ENCODE measurements at regions of chr1 and their contacts with region 1.

Region 1: DNA sequence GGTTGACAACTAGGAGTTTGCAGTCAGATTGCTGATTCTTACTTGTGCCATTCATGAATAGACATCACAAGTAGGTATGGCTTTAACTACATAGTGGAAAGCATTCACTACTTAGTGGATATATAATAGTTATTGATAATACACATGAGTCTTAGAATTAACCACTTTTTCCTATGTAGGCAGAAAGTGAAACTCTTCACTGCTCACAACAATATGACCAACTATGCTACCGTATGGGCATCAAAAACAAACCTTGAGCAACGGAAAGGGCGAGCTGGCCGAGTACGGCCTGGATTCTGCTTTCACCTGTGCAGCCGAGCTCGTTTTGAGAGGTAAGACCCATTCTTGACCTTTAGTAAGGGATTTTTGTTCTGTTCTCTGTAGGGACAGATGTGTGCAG is 38.7 kb downstream of the DHX9 start:
- DNase-seq: no peak
- H3K4me3 ChIP-seq: no peak overlapping the region
- H3K27ac ChIP-seq: no peak overlapping the region
- H3K4me1 ChIP-seq: no peaks in the 10 kb centered on the region
- H3K27me3 ChIP-seq: no peaks in the 10 kb centered on the region
- CTCF ChIP-seq: no peak
- POLR2A ChIP-seq: no peak

Region 2: GRCh38 chr1:182863940-182864339 is 13.9 kb before region 1 on chr1:
- CTCF ChIA-PET with region 1: no interaction called
- POLR2A ChIA-PET with region 1: no interaction called
- dilution Hi-C with region 1: no loop called
- intact Hi-C with region 1: loop called (anchors 2 kb)
- DNase-seq: no peak
- H3K4me3 ChIP-seq: no peak overlapping the region
- H3K27ac ChIP-seq: no peak overlapping the region
- H3K4me1 ChIP-seq: no peaks in the 10 kb centered on the region
- H3K27me3 ChIP-seq: no peaks in the 10 kb centered on the region
- CTCF ChIP-seq: no peak
- POLR2A ChIP-seq: no peak

Measured in endothelial cell of umbilical vein (primary cell).